Activated CD4-positive, alpha-beta T cell treated with anti-CD3 and anti-CD28 coated beads for 36 hours (primary cell): ENCODE measurements at regions of chr4 and their contacts with region 1.

Region 1: GRCh38 chr4:153750197-153750817 is 9.5 kb downstream of the RNF175 start:
- DNase-seq: peak; percentile 81
- ATAC-seq: peak; percentile 97
- H3K4me3 Mint-ChIP-seq: no peak overlapping the region
- H3K27ac Mint-ChIP-seq: no peak overlapping the region
- H3K4me1 Mint-ChIP-seq: peaks cover 9% of the 10 kb centered on the region
- H3K27me3 Mint-ChIP-seq: no peaks in the 10 kb centered on the region

Region 2: GRCh38 chr4:153344131-153345010 is 405.9 kb before region 1 on chr4 and contains the start of gene MND1:
- CTCF ChIA-PET with region 1: interaction called, 10 read pairs
- POLR2A ChIA-PET with region 1: no interaction called
- intact Hi-C with region 1: loop called (anchors 1 to 5 kb)
- DNase-seq: peak; percentile 96
- ATAC-seq: peak; percentile 93
- H3K4me3 Mint-ChIP-seq: peak within 1 kb of the TSS; percentile 85
- H3K27ac Mint-ChIP-seq: peak within 1 kb of the TSS; percentile 90
- H3K4me1 Mint-ChIP-seq: peaks cover 36% of the 10 kb centered on the region
- H3K27me3 Mint-ChIP-seq: peaks cover 7% of the 10 kb centered on the region
- total RNA-seq, gene MND1: 34.1 to 41.9 TPM

Region 3: DNA sequence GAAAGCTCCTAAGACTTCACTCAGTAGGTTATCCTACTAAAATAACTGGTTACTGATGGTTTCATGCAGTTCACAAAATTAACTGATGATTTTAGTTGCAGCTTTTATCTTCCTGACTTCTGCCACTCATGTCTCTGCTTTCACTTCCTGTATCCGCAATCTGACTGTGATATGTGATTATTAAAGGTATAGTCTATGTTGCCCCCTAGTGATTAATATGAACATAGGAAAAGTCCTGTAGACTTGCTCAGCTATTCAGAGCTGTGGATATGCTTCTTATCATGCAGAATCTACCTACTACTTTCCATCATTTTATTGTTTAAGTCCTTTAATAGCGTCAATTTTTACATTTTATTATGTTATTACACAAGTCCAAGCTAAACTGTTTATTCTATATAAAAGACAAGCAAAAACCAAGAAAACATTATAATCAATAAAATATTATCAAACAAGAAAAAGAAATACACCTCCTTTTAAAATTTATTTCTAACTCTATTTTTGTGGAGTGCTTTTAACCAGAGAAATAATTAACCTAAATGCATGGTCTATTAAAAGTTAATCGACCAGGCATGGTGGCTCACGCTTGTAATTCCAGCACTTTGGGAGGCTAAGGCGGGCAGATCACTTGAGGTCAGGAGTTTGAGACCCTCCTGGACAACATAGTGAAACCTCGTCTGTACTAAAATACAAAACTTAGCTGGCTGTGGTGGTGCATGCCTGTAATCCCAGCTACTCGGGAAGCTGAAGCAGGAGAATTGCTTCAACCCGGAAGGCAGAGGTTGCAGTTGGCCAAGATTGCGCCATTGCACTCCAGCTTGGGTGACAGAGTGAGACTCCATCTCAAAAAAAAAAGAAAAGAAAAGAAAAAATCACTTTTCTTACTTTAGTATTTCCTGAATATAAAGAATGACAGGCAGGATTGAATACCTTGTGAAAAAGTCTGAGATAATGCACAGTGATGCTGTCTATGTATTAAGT is 106.6 kb before region 1 on chr4:
- CTCF ChIA-PET with region 1: interaction called, 69 read pairs
- POLR2A ChIA-PET with region 1: no interaction called
- intact Hi-C with region 1: loop called in 1 of 2 experiments (anchors 1 kb)
- DNase-seq: no peak
- ATAC-seq: peak; percentile 92
- H3K4me3 Mint-ChIP-seq: no peak overlapping the region
- H3K27ac Mint-ChIP-seq: no peak overlapping the region
- H3K4me1 Mint-ChIP-seq: peaks cover 23% of the 10 kb centered on the region
- H3K27me3 Mint-ChIP-seq: no peaks in the 10 kb centered on the region

Region 4: DNA sequence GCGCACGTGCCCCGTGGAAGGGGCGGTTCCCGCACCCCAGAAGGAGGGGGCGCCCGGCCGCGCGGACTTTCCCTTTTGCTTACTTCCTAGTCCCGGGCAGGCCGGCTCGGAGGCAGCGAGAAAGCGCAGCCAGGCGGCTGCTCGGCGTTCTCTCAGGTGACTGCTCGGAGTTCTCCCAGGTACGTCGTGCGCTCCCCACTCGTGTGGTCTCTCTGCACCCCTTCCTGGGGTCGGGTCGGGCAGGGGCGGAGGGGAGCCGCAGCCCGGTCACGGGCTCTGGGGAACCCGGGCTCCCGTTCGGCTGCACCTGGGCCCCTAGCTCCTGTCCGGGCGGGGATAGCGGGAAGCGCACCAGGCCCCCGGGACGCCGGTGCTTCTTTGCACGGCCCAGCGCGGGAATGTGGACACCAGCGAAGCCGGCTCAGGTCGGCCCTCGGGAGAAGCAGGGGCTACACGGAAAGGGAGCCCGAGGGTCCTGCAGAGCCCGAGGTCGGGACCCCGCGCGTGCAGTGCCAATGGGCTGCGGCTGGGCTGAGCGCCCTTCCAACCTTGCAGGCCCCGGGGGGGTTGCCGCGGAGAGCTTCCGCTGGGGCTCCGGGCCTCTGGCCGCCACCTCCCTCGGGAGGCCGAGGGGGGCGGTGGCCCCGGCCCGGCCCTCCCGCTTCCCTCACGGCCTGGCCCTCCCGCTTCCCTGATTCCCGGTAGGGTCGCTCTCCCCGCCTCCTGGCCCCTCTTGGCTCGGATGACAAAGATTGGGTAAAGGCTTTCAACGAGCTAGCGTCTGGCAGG is 65.9 kb before region 1 on chr4 and contains the start of gene TLR2:
- CTCF ChIA-PET with region 1: interaction called, 12 read pairs
- POLR2A ChIA-PET with region 1: no interaction called
- intact Hi-C with region 1: no loop called
- DNase-seq: peak; percentile 83
- ATAC-seq: peak; percentile 95
- H3K4me3 Mint-ChIP-seq: peak within 1 kb of the TSS; percentile 73
- H3K27ac Mint-ChIP-seq: peak within 1 kb of the TSS; percentile 58
- H3K4me1 Mint-ChIP-seq: peaks cover 11% of the 10 kb centered on the region
- H3K27me3 Mint-ChIP-seq: peaks cover 21% of the 10 kb centered on the region
- total RNA-seq, gene TLR2: 1.3 to 2.0 TPM

Region 5: GRCh38 chr4:154030746-154031145 is 280.4 kb after region 1 on chr4:
- CTCF ChIA-PET with region 1: no interaction called
- POLR2A ChIA-PET with region 1: no interaction called
- intact Hi-C with region 1: no loop called
- DNase-seq: no peak
- ATAC-seq: no peak
- H3K4me3 Mint-ChIP-seq: no peak overlapping the region
- H3K27ac Mint-ChIP-seq: no peak overlapping the region
- H3K4me1 Mint-ChIP-seq: no peaks in the 10 kb centered on the region
- H3K27me3 Mint-ChIP-seq: peaks cover 23% of the 10 kb centered on the region